CD8-positive, alpha-beta T cell (primary cell): ENCODE measurements at regions of chr4 and their contacts with region 1.

Region 1: GRCh38 chr4:1011022-1011694 is at the start of gene FGFRL1:
- DNase-seq: peak; percentile 83 to 94 (median 93)
- ATAC-seq: peak; percentile 55
- H3K4me3 ChIP-seq: peak within 1 kb of the TSS; percentile 65 to 86
- H3K4me3 Mint-ChIP-seq: peak within 1 kb of the TSS; percentile 89
- H3K27ac ChIP-seq: peak within 1 kb of the TSS; percentile 65 to 71
- H3K27ac Mint-ChIP-seq: peak within 1 kb of the TSS; percentile 96
- H3K4me1 ChIP-seq: peaks cover 26% of the 10 kb centered on the region
- H3K4me1 Mint-ChIP-seq: peaks cover 12% of the 10 kb centered on the region
- H3K27me3 ChIP-seq: peaks cover 0 to 9% of the 10 kb centered on the region in 2 experiments
- H3K27me3 Mint-ChIP-seq: peaks cover 25% of the 10 kb centered on the region
- CTCF ChIP-seq: no peak
- total RNA-seq, gene FGFRL1: 26.3 to 30.2 TPM

Region 2: DNA sequence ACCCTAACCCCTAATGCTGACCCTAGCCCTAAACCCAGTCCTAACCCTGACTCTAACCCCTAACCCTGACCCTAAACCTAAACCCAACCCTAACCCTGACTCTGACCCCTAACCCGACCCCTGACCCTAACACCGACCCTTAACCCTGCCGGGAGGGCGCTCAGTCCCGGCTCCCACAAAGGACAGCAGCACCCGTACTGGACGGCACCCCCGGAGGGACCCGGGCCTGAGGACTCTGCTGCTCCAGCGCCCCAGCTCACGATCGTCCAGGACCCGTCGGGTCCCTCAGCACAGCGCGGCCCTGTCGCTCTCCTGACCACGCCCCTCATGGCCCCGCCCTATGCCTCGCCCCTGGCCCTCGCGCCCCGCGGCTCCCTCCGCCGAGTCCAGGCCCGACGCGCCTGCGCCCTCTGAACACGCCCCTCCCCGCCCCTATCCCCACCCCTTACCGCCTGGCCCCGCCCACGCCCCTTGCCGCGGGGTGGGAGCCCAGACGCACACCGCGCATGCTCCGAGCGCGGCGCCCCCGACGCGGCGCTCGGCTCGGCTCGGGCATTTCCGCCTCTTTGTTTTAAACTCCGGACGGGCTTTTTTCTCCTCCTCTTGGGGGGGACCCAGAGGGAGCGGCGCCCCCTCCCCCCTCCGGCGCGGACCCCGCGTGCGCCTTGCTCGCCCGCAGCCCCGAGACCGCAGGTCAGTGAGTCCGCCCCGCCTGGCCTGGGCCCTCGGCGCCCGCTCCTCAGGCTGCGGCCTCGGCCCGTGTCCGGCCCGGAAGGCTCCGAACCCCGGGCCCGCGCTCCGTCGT is 305.7 kb before region 1 on chr4 and contains the start of gene PCGF3:
- CTCF ChIA-PET with region 1: no interaction called
- POLR2A ChIA-PET with region 1: no interaction called
- intact Hi-C with region 1: loop called in 1 of 2 experiments (anchors 1 kb)
- DNase-seq: peak; percentile 92 to 97 (median 95)
- ATAC-seq: peak; percentile 98
- H3K4me3 ChIP-seq: peak within 1 kb of the TSS; percentile 75 to 89
- H3K4me3 Mint-ChIP-seq: peak within 1 kb of the TSS; percentile 82
- H3K27ac ChIP-seq: peak within 1 kb of the TSS; percentile 68 to 75
- H3K27ac Mint-ChIP-seq: peak within 1 kb of the TSS; percentile 60
- H3K4me1 ChIP-seq: peaks cover 24% of the 10 kb centered on the region
- H3K4me1 Mint-ChIP-seq: peaks cover 28% of the 10 kb centered on the region
- H3K27me3 ChIP-seq: no peaks in the 10 kb centered on the region
- H3K27me3 Mint-ChIP-seq: no peaks in the 10 kb centered on the region
- CTCF ChIP-seq: no peak
- total RNA-seq, gene PCGF3: 39.1 to 39.5 TPM

Region 3: GRCh38 chr4:931960-932712 is 79.0 kb before region 1 on chr4 and contains the starts of genes GAK and TMEM175:
- CTCF ChIA-PET with region 1: no interaction called
- POLR2A ChIA-PET with region 1: interaction called, 4 read pairs
- intact Hi-C with region 1: loop called in 1 of 2 experiments (anchors 2 kb)
- DNase-seq: peak; percentile 90 to 99 (median 96)
- ATAC-seq: peak; percentile 91
- H3K4me3 ChIP-seq: peak within 1 kb of the TSS; percentile 91 to 96
- H3K4me3 Mint-ChIP-seq: peak within 1 kb of the TSS; percentile 96
- H3K27ac ChIP-seq: peak within 1 kb of the TSS; percentile 91 to 92
- H3K27ac Mint-ChIP-seq: peak within 1 kb of the TSS; percentile 97
- H3K4me1 ChIP-seq: peaks cover 39% of the 10 kb centered on the region
- H3K4me1 Mint-ChIP-seq: peaks cover 51% of the 10 kb centered on the region
- H3K27me3 ChIP-seq: no peaks in the 10 kb centered on the region
- H3K27me3 Mint-ChIP-seq: no peaks in the 10 kb centered on the region
- CTCF ChIP-seq: no peak
- total RNA-seq, gene GAK: 161 to 162 TPM
- total RNA-seq, gene TMEM175: 44.9 to 47.2 TPM

Region 4: GRCh38 chr4:973431-974397 is 37.4 kb before region 1 on chr4 and contains the start of gene DGKQ:
- CTCF ChIA-PET with region 1: no interaction called
- POLR2A ChIA-PET with region 1: no interaction called
- intact Hi-C with region 1: loop called (anchors 1 kb)
- DNase-seq: peak; percentile 83 to 95 (median 89)
- ATAC-seq: peak; percentile 82
- H3K4me3 ChIP-seq: peak within 1 kb of the TSS; percentile 74 to 77
- H3K4me3 Mint-ChIP-seq: peak within 1 kb of the TSS; percentile 62
- H3K27ac ChIP-seq: peak within 1 kb of the TSS; percentile 56 to 85
- H3K27ac Mint-ChIP-seq: peak within 1 kb of the TSS; percentile 37
- H3K4me1 ChIP-seq: peaks cover 32% of the 10 kb centered on the region
- H3K4me1 Mint-ChIP-seq: peaks cover 17% of the 10 kb centered on the region
- H3K27me3 ChIP-seq: no peaks in the 10 kb centered on the region
- H3K27me3 Mint-ChIP-seq: no peaks in the 10 kb centered on the region
- CTCF ChIP-seq: no peak
- total RNA-seq, gene DGKQ: 28.2 to 29.7 TPM

Region 5: GRCh38 chr4:1055721-1056590 is 44.8 kb after region 1 on chr4:
- CTCF ChIA-PET with region 1: interaction called, 8 read pairs
- POLR2A ChIA-PET with region 1: interaction called, 8 read pairs
- intact Hi-C with region 1: loop called (anchors 2 kb)
- DNase-seq: peak; percentile 76 to 96 (median 85)
- ATAC-seq: peak; percentile 94
- H3K4me3 ChIP-seq: peak overlapping the region; percentile 42 to 48
- H3K4me3 Mint-ChIP-seq: peak overlapping the region; percentile 72
- H3K27ac ChIP-seq: peak overlapping the region; percentile 70 to 76
- H3K27ac Mint-ChIP-seq: peak overlapping the region; percentile 92
- H3K4me1 ChIP-seq: peaks cover 16% of the 10 kb centered on the region
- H3K4me1 Mint-ChIP-seq: peaks cover 18% of the 10 kb centered on the region
- H3K27me3 ChIP-seq: no peaks in the 10 kb centered on the region
- H3K27me3 Mint-ChIP-seq: no peaks in the 10 kb centered on the region
- CTCF ChIP-seq: no peak